GM12878 (cell line): ENCODE measurements at regions of chr2 and their contacts with region 1.

Region 1: GRCh38 chr2:169824373-169825333 is at the start of gene METTL5:
- DNase-seq: peak; percentile 20
- ATAC-seq: peak; percentile 81
- H3K4me3 ChIP-seq: peak within 1 kb of the TSS; percentile 81
- H3K27ac ChIP-seq: peak within 1 kb of the TSS; percentile 62
- H3K4me1 ChIP-seq: peaks cover 10% of the 10 kb centered on the region; the same call in 1 of the 2 replicates
- H3K27me3 ChIP-seq: no peaks in the 10 kb centered on the region
- CTCF ChIP-seq: peak; percentile 85 to 99 (median 98)
- EP300 ChIP-seq: no peak; a peak in 1 of 4 replicates
- POLR2A ChIP-seq: peak; percentile 95
- RAD21 ChIP-seq: peak; percentile 62
- polyA plus RNA-seq, gene METTL5: 198 to 204 TPM

Region 2: DNA sequence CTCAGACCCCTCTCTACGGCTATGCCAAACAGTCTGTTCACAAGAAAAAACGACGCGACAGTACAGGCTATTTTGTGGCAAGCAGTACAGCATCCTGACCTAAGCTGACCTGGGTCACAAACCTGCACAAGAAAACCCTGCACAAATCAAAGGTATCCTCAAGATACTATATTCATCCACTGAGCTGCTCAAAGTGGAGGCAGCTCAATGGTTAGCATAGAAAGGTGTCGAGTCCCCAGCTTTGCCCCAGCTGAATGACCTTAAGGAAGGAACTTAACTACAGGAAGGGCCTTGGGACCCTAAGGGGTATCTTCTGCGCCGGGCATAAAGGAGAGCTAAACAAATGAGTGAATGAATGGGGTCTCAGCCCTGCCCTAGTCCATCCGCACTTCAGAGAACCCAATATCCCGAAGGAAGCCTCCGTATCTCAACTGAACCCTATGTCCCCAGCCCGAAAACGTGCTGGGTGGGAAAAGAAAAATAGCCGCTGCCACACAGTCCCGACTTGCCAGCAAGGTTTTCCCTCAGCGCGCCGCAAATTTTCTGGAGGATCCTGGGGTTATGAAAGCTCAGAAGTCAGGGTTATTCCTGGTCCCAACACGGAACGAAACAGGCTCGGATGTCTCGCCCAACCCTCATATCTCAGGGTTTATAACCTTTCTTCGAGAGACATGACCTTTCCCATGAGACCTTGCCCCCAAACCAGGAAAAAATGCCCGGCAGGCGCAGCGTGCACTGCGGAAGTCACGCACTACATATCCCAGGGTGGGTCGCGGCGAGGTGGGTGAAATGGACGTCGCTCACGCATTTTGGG is 251.3 kb before region 1 on chr2 and contains the start of gene FASTKD1:
- CTCF ChIA-PET with region 1: interaction called, 10 read pairs
- POLR2A ChIA-PET with region 1: no interaction called
- RAD21 ChIA-PET with region 1: interaction called, 3 read pairs
- SMC1A ChIA-PET with region 1: interaction called, 3 read pairs
- in situ Hi-C with region 1: no loop called
- intact Hi-C with region 1: no loop called
- DNase-seq: peak; percentile 79
- ATAC-seq: peak; percentile 98
- H3K4me3 ChIP-seq: peak within 1 kb of the TSS; percentile 81
- H3K27ac ChIP-seq: peak within 1 kb of the TSS; percentile 71
- H3K4me1 ChIP-seq: no peaks in the 10 kb centered on the region
- H3K27me3 ChIP-seq: no peaks in the 10 kb centered on the region
- CTCF ChIP-seq: no peak
- EP300 ChIP-seq: no peak
- POLR2A ChIP-seq: peak; percentile 46; the same call in 1 of the 2 replicates
- RAD21 ChIP-seq: no peak
- polyA plus RNA-seq, gene FASTKD1: 60.5 to 66.3 TPM

Region 3: DNA sequence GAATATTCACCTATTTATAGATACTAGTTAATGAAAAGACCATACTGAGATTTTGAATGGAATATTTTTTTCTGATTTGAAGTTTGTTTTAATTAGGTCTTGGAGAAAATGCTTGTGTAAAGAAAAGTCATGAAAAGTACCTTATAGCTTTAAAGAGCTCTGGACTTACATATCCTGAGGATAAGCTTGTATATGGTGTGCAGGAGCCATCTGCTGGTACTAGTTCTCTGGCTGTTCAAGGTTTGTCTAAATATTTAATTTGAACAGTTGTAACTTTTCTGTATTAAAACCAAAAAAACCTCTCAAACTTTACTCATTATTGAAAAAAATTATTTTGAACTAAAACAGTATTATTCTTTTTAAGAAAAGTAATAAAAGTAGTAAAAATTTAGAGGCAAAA is 52.7 kb after region 1 on chr2:
- CTCF ChIA-PET with region 1: interaction called, 21 read pairs
- POLR2A ChIA-PET with region 1: interaction called, 4 read pairs
- RAD21 ChIA-PET with region 1: interaction called, 11 read pairs
- SMC1A ChIA-PET with region 1: interaction called, 13 read pairs
- in situ Hi-C with region 1: no loop called
- intact Hi-C with region 1: no loop called
- DNase-seq: no peak
- ATAC-seq: peak; percentile 48; the same call in 1 of the 3 replicates
- H3K4me3 ChIP-seq: no peak overlapping the region
- H3K27ac ChIP-seq: no peak overlapping the region
- H3K4me1 ChIP-seq: no peaks in the 10 kb centered on the region
- H3K27me3 ChIP-seq: no peaks in the 10 kb centered on the region
- CTCF ChIP-seq: peak; percentile 13 to 51 (median 29); a peak in 3 of 6 replicates
- EP300 ChIP-seq: no peak
- POLR2A ChIP-seq: no peak
- RAD21 ChIP-seq: peak; percentile 36; the same call in 1 of the 2 replicates

Region 4: GRCh38 chr2:170221317-170222288 is 396.9 kb after region 1 on chr2:
- CTCF ChIA-PET with region 1: no interaction called
- POLR2A ChIA-PET with region 1: no interaction called
- RAD21 ChIA-PET with region 1: no interaction called
- SMC1A ChIA-PET with region 1: no interaction called
- in situ Hi-C with region 1: no loop called
- intact Hi-C with region 1: loop called (anchors 10 kb)
- DNase-seq: no peak
- ATAC-seq: peak; percentile 56
- H3K4me3 ChIP-seq: no peak overlapping the region
- H3K27ac ChIP-seq: peak overlapping the region; percentile 31; the same call in 1 of the 2 replicates
- H3K4me1 ChIP-seq: peaks cover 7% of the 10 kb centered on the region
- H3K27me3 ChIP-seq: no peaks in the 10 kb centered on the region
- CTCF ChIP-seq: no peak
- EP300 ChIP-seq: no peak
- POLR2A ChIP-seq: no peak
- RAD21 ChIP-seq: no peak